Activated CD8-positive, alpha-beta T cell treated with anti-CD3 and anti-CD28 coated beads, Interleukin-2, amount 10 ng/mL, durations not matched to agents 7 days and 5 days (primary cell): ENCODE measurements at regions of chr19 and their contacts with region 1.

Region 1: DNA sequence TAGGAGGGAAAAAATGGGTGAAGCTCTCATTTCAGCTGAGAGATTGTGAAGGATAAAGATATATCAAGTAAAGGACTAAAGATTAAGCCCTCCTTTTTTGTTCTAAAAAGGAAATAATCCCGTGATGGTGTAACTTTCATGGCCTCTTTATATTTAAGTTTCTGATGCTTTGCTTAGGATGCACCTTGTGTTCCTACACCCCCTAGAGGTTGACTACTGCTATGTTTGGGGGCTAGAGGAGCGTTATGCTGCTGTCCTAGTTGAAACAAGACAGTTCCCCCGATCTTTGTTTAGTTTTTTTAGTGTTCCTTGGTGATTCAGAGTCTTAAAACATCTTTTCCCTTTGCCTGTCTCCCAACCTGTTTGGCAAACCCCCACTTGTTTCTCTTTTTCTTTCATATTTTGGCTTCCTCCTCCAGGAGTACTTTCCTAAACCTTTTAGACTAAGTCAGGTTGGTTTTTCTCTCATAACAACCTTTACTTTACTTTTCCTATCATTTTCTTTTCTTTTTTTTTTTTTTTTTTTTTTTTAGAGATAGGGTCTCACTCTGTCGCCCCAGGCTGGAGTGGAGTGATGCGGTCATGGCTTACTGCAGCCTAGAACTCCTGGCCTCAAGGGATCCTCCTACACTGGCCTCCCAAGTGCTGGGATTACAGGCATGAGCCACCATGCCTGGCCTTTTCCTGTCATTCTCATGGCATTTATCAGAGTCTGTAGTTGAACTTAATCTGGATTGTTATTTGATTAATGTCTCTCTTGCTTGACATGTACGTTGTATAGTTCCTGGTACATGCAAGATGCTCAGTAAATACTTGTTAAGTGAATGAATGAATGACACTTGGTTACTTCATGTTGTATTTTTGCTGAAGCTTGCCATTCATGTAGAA is 2.8 kb downstream of the UBA2 start:
- DNase-seq: peak; percentile 72
- ATAC-seq: peak; percentile 57
- H3K4me3 Mint-ChIP-seq: peak overlapping the region; percentile 99
- H3K27ac Mint-ChIP-seq: peak overlapping the region; percentile 72
- H3K4me1 Mint-ChIP-seq: peaks cover 30% of the 10 kb centered on the region
- H3K27me3 Mint-ChIP-seq: no peaks in the 10 kb centered on the region

Region 2: GRCh38 chr19:34404109-34404897 is 26.7 kb before region 1 on chr19 and contains the start of gene PDCD2L:
- CTCF ChIA-PET with region 1: interaction called, 10 read pairs
- POLR2A ChIA-PET with region 1: interaction called, 9 read pairs
- DNase-seq: peak; percentile 95
- ATAC-seq: peak; percentile 97
- H3K4me3 Mint-ChIP-seq: peak within 1 kb of the TSS; percentile 88
- H3K27ac Mint-ChIP-seq: peak within 1 kb of the TSS; percentile 81
- H3K4me1 Mint-ChIP-seq: peaks cover 22% of the 10 kb centered on the region
- H3K27me3 Mint-ChIP-seq: no peaks in the 10 kb centered on the region
- total RNA-seq, gene PDCD2L: 12.9 to 13.3 TPM

Region 3: DNA sequence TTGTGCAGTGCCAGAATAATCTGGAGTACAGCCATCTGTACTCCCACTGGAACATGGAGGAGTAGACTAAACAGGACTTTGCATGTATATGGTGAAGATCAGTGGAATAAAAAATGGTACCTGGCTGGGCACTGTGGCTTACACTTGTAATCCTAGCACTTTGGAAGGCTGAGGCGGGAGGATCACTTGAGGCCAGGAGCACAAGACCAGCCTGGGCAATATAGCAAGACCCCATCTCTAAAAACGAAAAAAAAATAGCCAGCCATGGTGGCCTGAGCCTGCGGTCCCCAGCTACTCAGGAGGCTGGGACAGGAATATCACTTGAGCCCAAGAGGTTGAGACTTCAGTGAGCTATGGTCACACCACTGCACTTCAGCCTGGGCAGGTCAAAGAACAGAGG is 17.2 kb after region 1 on chr19:
- CTCF ChIA-PET with region 1: interaction called, 13 read pairs
- POLR2A ChIA-PET with region 1: interaction called, 6 read pairs
- DNase-seq: no peak
- ATAC-seq: no peak
- H3K4me3 Mint-ChIP-seq: no peak overlapping the region
- H3K27ac Mint-ChIP-seq: peak overlapping the region; percentile 69
- H3K4me1 Mint-ChIP-seq: no peaks in the 10 kb centered on the region
- H3K27me3 Mint-ChIP-seq: no peaks in the 10 kb centered on the region

Region 4: GRCh38 chr19:34480971-34481821 is 50.2 kb after region 1 on chr19 and contains the start of gene WTIP:
- CTCF ChIA-PET with region 1: no interaction called
- POLR2A ChIA-PET with region 1: no interaction called
- DNase-seq: no peak
- ATAC-seq: peak; percentile 5
- H3K4me3 Mint-ChIP-seq: no peak within 1 kb of the TSS
- H3K27ac Mint-ChIP-seq: no peak within 1 kb of the TSS
- H3K4me1 Mint-ChIP-seq: no peaks in the 10 kb centered on the region
- H3K27me3 Mint-ChIP-seq: peaks cover 36% of the 10 kb centered on the region
- total RNA-seq, gene WTIP: 0.68 to 1.2 TPM